Activated naive CD4-positive, alpha-beta T cell treated with anti-CD3 and anti-CD28 coated beads for 36 hours (primary cell): ENCODE measurements at regions of chr2 and their contacts with region 1.

Region 1: DNA sequence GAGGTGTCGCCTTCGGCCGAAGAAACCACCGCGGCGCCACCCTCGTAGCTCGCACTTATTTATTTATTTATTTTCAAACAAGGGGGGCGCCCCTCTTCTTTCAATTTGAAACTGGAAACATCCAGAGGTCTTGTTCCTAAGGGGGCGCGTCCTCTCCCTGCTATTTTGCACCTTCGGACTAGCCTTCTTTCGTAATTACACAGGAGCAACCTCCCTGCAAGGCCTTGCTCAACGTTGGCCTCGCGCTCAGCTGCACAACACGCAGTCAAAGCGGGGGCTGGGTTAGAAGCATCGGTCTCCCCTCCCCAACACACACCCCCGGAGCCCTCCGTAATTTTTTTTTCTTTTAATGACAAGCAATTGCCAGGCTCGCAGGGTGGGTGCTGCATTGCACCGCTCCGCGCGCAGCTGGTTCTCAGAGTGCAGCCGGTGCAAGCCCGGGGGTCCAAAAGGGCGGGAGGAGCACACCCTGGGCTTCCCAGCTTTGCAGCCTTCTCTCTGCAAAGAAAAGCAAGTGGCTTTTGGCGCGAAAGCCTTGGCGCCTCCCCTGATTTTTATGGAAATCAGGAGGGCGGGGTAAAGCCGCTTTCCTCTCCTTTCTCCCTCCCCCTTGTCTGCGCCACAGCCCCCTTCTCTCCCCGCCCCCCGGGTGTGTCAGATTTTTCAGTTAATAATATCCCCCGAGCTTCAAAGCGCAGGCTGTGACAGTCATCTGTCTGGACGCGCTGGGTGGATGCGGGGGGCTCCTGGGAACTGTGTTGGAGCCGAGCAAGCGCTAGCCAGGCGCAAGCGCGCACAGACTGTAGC is at the start of gene MYCN:
- DNase-seq: peak; percentile 68
- H3K4me3 Mint-ChIP-seq: peak within 1 kb of the TSS; percentile 58
- H3K27ac Mint-ChIP-seq: no peak within 1 kb of the TSS
- H3K4me1 Mint-ChIP-seq: peaks cover 31% of the 10 kb centered on the region
- H3K27me3 Mint-ChIP-seq: peaks cover 51% of the 10 kb centered on the region
- total RNA-seq, gene MYCN: 0.19 TPM in 1 of 2 experiments, not detected in the other

Region 2: GRCh38 chr2:15354586-15355366 is 585.3 kb before region 1 on chr2:
- CTCF ChIA-PET with region 1: no interaction called
- intact Hi-C with region 1: no loop called
- DNase-seq: no peak
- H3K4me3 Mint-ChIP-seq: no peak overlapping the region
- H3K27ac Mint-ChIP-seq: no peak overlapping the region
- H3K4me1 Mint-ChIP-seq: no peaks in the 10 kb centered on the region
- H3K27me3 Mint-ChIP-seq: no peaks in the 10 kb centered on the region

Region 3: DNA sequence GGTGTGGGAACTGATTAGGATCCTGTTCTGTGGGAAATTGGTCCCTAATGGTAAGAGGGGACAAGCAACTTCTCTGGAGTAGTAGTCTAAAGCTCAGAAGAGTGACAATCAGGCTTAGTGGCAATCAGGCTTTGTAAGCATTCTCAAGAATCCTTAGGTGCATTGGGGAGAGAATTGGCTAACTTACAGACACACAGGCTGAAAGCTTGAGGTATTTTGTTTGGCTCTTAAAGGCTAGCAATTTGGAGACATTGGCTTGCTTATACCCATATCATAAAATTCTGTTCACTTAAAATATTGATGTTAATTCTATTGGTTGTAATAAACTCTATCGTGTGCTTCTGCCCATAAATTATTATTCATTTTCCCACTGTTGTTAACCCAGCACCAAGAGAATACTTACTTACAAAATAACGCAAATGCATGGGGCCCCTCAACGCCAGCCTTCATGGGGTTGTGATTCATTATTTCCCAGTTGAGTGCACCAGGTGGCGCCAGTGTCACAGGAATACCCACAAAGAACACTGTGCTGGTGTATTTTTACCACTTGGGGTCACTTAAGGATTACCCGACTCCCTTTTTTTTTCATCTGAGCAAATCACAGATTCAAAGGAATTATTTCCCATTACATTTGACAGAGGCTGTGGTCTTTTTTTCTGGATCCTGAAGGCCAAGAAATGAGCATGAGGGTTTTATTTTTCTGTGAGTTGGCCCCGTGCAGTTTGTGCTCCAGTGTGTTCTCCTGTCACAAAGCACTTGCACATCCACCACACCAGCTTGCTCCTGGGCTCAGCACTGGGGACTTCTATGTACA is 302.9 kb before region 1 on chr2:
- CTCF ChIA-PET with region 1: interaction called, 7 read pairs
- intact Hi-C with region 1: loop called (anchors 1 kb)
- DNase-seq: peak; percentile 81
- H3K4me3 Mint-ChIP-seq: no peak overlapping the region
- H3K27ac Mint-ChIP-seq: no peak overlapping the region
- H3K4me1 Mint-ChIP-seq: peaks cover 6% of the 10 kb centered on the region
- H3K27me3 Mint-ChIP-seq: no peaks in the 10 kb centered on the region

Region 4: GRCh38 chr2:15919716-15920434 is 20.2 kb before region 1 on chr2:
- CTCF ChIA-PET with region 1: no interaction called
- intact Hi-C with region 1: no loop called
- DNase-seq: no peak
- H3K4me3 Mint-ChIP-seq: no peak overlapping the region
- H3K27ac Mint-ChIP-seq: no peak overlapping the region
- H3K4me1 Mint-ChIP-seq: no peaks in the 10 kb centered on the region
- H3K27me3 Mint-ChIP-seq: peaks cover 16% of the 10 kb centered on the region

Region 5: GRCh38 chr2:16035747-16036745 is 96.0 kb after region 1 on chr2:
- CTCF ChIA-PET with region 1: interaction called, 6 read pairs
- intact Hi-C with region 1: loop called (anchors 1 kb)
- DNase-seq: no peak
- H3K4me3 Mint-ChIP-seq: no peak overlapping the region
- H3K27ac Mint-ChIP-seq: no peak overlapping the region
- H3K4me1 Mint-ChIP-seq: no peaks in the 10 kb centered on the region
- H3K27me3 Mint-ChIP-seq: no peaks in the 10 kb centered on the region

Region 6: DNA sequence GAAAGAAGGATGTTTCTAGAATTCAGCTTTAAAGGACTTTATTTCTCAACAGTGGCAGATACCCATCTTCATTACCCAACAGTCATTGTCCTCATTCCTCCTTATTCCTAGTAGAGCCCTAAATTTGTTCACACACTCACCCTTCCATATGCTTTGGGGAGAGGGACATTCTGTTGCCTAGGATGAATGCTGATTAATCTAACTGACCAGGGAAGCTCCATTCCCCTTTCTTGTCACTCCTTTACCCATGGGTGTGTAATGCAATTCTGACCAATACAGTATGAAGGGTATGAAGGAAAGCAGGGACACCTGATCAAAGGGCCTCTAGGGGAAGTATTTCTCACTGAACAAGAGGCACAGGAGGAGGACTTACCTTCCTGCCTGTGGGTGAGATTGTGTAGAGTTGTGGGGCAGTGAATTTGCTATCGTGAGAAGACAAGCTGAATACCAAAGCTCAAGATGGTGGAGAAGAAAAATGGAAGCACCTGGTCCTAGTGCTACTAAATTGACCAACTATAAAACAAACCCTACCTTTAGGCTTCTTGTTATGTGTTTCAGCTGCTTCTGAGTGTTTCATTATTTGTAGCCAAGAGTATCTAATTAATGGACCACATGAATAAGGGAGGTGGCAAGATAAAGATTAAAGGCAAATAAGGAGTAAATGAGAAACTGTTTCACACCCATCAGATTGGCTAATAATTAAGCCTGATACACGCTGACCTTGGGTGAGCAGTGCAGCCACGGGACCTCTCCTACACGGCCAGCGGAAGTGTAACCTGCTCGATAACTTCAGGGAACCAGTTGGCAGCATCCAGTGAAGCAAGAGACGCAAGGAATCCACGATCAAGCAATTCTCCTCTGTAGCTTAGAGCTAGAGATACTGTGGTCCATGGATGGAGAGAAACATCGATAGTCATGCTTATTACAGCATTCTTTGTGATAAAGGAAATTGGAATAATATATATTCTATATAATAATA is 202.6 kb after region 1 on chr2:
- CTCF ChIA-PET with region 1: interaction called, 12 read pairs
- intact Hi-C with region 1: loop called (anchors 5 kb)
- DNase-seq: no peak
- H3K4me3 Mint-ChIP-seq: no peak overlapping the region
- H3K27ac Mint-ChIP-seq: no peak overlapping the region
- H3K4me1 Mint-ChIP-seq: no peaks in the 10 kb centered on the region
- H3K27me3 Mint-ChIP-seq: no peaks in the 10 kb centered on the region

Region 7: GRCh38 chr2:16281451-16282336 is 341.6 kb after region 1 on chr2:
- CTCF ChIA-PET with region 1: interaction called, 29 read pairs
- intact Hi-C with region 1: loop called (anchors 1 kb)
- DNase-seq: peak; percentile 16
- H3K4me3 Mint-ChIP-seq: no peak overlapping the region
- H3K27ac Mint-ChIP-seq: no peak overlapping the region
- H3K4me1 Mint-ChIP-seq: no peaks in the 10 kb centered on the region
- H3K27me3 Mint-ChIP-seq: peaks cover 2% of the 10 kb centered on the region

Region 8: DNA sequence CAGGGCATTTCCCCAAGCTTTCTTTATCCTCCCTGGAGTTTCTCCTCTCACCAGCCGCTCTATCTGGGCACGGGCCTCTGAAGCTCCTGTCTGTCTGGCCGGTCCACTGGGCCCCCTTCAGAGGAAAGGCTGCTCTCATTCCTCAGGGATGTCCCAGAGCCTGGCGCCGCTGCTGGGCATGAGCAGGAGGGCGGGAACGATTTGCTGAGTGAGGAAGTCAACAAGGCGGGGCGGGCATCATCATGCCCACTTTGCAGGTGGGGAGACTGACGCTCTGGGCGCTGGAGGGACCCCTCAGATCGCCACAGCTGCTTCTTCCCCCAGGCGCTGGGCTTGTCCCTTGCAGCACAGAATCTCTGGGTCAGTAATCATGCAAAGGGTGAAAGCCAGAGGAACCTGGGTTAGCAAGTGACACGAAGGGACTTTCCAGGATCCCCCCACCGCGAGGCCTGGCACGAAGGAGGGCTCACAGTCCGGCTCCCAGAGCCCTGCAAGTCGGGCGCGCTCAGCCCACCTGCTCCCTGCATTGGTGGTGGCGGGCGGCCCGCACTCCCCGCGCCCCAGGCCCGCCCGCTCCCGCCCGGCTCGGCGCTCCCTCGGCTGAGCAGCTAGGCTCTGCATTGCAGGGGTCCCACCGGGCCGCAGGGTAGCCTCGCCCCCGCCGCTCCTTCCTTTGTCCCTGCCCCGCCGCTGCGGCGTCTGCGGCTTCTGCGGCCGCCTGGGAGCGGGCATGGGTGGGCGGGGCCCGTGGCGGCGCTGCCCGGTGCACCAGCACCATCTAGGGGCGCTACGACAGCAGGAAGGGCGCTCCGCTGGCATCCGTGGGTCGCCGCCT is 567.8 kb after region 1 on chr2:
- CTCF ChIA-PET with region 1: interaction called, 4 read pairs
- intact Hi-C with region 1: loop called (anchors 2 kb)
- DNase-seq: peak; percentile 34
- H3K4me3 Mint-ChIP-seq: no peak overlapping the region
- H3K27ac Mint-ChIP-seq: no peak overlapping the region
- H3K4me1 Mint-ChIP-seq: no peaks in the 10 kb centered on the region
- H3K27me3 Mint-ChIP-seq: peaks cover 58% of the 10 kb centered on the region